Activated naive CD4-positive, alpha-beta T cell treated with anti-CD3 and anti-CD28 coated beads for 36 hours (primary cell): ENCODE measurements at regions of chrX and their contacts with region 1.

Region 1: GRCh38 chrX:124280294-124280902 is 52.1 kb upstream of the TEX13D start:
- DNase-seq: no peak
- H3K4me3 Mint-ChIP-seq: no peak overlapping the region
- H3K27ac Mint-ChIP-seq: peak overlapping the region; percentile 46
- H3K4me1 Mint-ChIP-seq: peaks cover 17% of the 10 kb centered on the region
- H3K27me3 Mint-ChIP-seq: no peaks in the 10 kb centered on the region

Region 2: GRCh38 chrX:124239911-124240310 is 40.5 kb before region 1 on chrX:
- CTCF ChIA-PET with region 1: interaction called, 3 read pairs
- intact Hi-C with region 1: loop called (anchors 1 kb)
- DNase-seq: peak; percentile 72
- H3K4me3 Mint-ChIP-seq: peak overlapping the region; percentile 15
- H3K27ac Mint-ChIP-seq: peak overlapping the region; percentile 42
- H3K4me1 Mint-ChIP-seq: peaks cover 40% of the 10 kb centered on the region
- H3K27me3 Mint-ChIP-seq: no peaks in the 10 kb centered on the region